ENCODE measurements at regions of chr5 and their contacts with region 1.

Region 1: GRCh38 chr5:83718195-83718825 is 2.3 kb downstream of the HAPLN1 start:
- DNase-seq: peak; percentile 70
- ATAC-seq: peak; percentile 79
- H3K4me3 ChIP-seq: no peak overlapping the region
- H3K27ac ChIP-seq: no peak overlapping the region
- H3K4me1 ChIP-seq: peaks cover 22% of the 10 kb centered on the region
- H3K27me3 ChIP-seq: peaks cover 7 to 24% of the 10 kb centered on the region in 2 experiments
- CTCF ChIP-seq: peak; percentile 86
- EP300 ChIP-seq: no peak
- POLR2A ChIP-seq: no peak
- RAD21 ChIP-seq: peak; percentile 83

Region 2: GRCh38 chr5:83777856-83778255 is 59.5 kb after region 1 on chr5:
- CTCF ChIA-PET with region 1: no interaction called
- POLR2A ChIA-PET with region 1: no interaction called
- in situ Hi-C with region 1: no loop called
- intact Hi-C with region 1: loop called (anchors 5 kb)
- DNase-seq: no peak
- ATAC-seq: no peak
- H3K4me3 ChIP-seq: no peak overlapping the region
- H3K27ac ChIP-seq: no peak overlapping the region
- H3K4me1 ChIP-seq: peaks cover 26% of the 10 kb centered on the region
- H3K27me3 ChIP-seq: no peaks in the 10 kb centered on the region
- CTCF ChIP-seq: no peak
- EP300 ChIP-seq: no peak
- POLR2A ChIP-seq: no peak
- RAD21 ChIP-seq: no peak

Region 3: GRCh38 chr5:83927140-83927733 is 208.9 kb after region 1 on chr5:
- CTCF ChIA-PET with region 1: interaction called, 6 read pairs
- POLR2A ChIA-PET with region 1: no interaction called
- in situ Hi-C with region 1: no loop called
- intact Hi-C with region 1: loop called (anchors 1 kb)
- DNase-seq: peak; percentile 41
- ATAC-seq: peak; percentile 80
- H3K4me3 ChIP-seq: no peak overlapping the region
- H3K27ac ChIP-seq: no peak overlapping the region
- H3K4me1 ChIP-seq: no peaks in the 10 kb centered on the region
- H3K27me3 ChIP-seq: no peaks in the 10 kb centered on the region
- CTCF ChIP-seq: peak; percentile 77
- EP300 ChIP-seq: no peak
- POLR2A ChIP-seq: no peak
- RAD21 ChIP-seq: peak; percentile 18; the same call in 1 of the 2 replicates

Region 4: GRCh38 chr5:84088995-84089394 is 370.7 kb after region 1 on chr5:
- CTCF ChIA-PET with region 1: no interaction called
- POLR2A ChIA-PET with region 1: no interaction called
- in situ Hi-C with region 1: loop called (anchors 25 kb)
- intact Hi-C with region 1: loop called (anchors 1 kb)
- DNase-seq: peak; percentile 18
- ATAC-seq: 0 out of 3 replicates have a peak, but pooled peaks have one; percentile 15
- H3K4me3 ChIP-seq: no peak overlapping the region
- H3K27ac ChIP-seq: no peak overlapping the region
- H3K4me1 ChIP-seq: peaks cover 14% of the 10 kb centered on the region
- H3K27me3 ChIP-seq: peaks cover 0 to 24% of the 10 kb centered on the region in 2 experiments; a peak in 3 of 5 replicates
- CTCF ChIP-seq: peak; percentile 43
- EP300 ChIP-seq: no peak
- POLR2A ChIP-seq: no peak
- RAD21 ChIP-seq: no peak

Region 5: DNA sequence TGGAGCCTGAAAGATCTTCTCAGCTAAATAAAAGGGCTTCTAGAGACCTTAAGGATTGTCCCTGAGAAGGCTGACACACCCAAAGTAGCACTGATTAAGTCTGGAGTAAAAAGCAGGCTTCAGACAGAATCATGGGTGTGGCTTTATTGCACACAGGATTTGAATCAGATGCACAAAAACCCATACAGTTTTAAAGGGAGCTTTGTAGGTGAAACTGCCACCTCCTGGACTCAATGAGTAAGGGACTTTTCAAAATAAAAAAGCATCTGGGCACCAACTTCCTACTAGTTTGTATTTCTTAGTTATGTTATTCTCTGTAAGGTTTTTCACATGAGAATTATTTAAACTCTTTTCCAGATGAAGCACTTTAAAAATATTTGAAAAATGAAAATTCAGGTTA is 537.0 kb after region 1 on chr5:
- CTCF ChIA-PET with region 1: interaction called, 6 read pairs
- POLR2A ChIA-PET with region 1: no interaction called
- in situ Hi-C with region 1: loop called (anchors 5 kb)
- intact Hi-C with region 1: loop called (anchors 1 kb)
- DNase-seq: peak; percentile 3
- ATAC-seq: peak; percentile 51
- H3K4me3 ChIP-seq: no peak overlapping the region
- H3K27ac ChIP-seq: no peak overlapping the region
- H3K4me1 ChIP-seq: no peaks in the 10 kb centered on the region
- H3K27me3 ChIP-seq: no peaks in the 10 kb centered on the region
- CTCF ChIP-seq: peak; percentile 22; the same call in 1 of the 2 replicates
- EP300 ChIP-seq: no peak
- POLR2A ChIP-seq: no peak
- RAD21 ChIP-seq: no peak

Region 6: GRCh38 chr5:84450617-84451414 is 732.5 kb after region 1 on chr5:
- CTCF ChIA-PET with region 1: no interaction called
- POLR2A ChIA-PET with region 1: no interaction called
- in situ Hi-C with region 1: no loop called
- intact Hi-C with region 1: loop called (anchors 10 kb)
- DNase-seq: no peak
- ATAC-seq: no peak
- H3K4me3 ChIP-seq: no peak overlapping the region
- H3K27ac ChIP-seq: no peak overlapping the region
- H3K4me1 ChIP-seq: no peaks in the 10 kb centered on the region
- H3K27me3 ChIP-seq: no peaks in the 10 kb centered on the region
- CTCF ChIP-seq: no peak
- EP300 ChIP-seq: no peak
- POLR2A ChIP-seq: no peak
- RAD21 ChIP-seq: no peak

Region 7: GRCh38 chr5:85049020-85049419 is 1330.7 kb after region 1 on chr5:
- CTCF ChIA-PET with region 1: no interaction called
- POLR2A ChIA-PET with region 1: no interaction called
- in situ Hi-C with region 1: loop called (anchors 25 kb)
- intact Hi-C with region 1: loop called (anchors 2 kb)
- DNase-seq: peak; percentile 4
- ATAC-seq: peak; percentile 89
- H3K4me3 ChIP-seq: no peak overlapping the region
- H3K27ac ChIP-seq: no peak overlapping the region
- H3K4me1 ChIP-seq: no peaks in the 10 kb centered on the region
- H3K27me3 ChIP-seq: no peaks in the 10 kb centered on the region; a peak in 1 of 5 replicates
- CTCF ChIP-seq: peak; percentile 45
- EP300 ChIP-seq: no peak
- POLR2A ChIP-seq: no peak
- RAD21 ChIP-seq: no peak

Measured in HepG2 (cell line).